OCI-LY7 (cell line): ENCODE measurements at regions of chr1 and their contacts with region 1.

Region 1: DNA sequence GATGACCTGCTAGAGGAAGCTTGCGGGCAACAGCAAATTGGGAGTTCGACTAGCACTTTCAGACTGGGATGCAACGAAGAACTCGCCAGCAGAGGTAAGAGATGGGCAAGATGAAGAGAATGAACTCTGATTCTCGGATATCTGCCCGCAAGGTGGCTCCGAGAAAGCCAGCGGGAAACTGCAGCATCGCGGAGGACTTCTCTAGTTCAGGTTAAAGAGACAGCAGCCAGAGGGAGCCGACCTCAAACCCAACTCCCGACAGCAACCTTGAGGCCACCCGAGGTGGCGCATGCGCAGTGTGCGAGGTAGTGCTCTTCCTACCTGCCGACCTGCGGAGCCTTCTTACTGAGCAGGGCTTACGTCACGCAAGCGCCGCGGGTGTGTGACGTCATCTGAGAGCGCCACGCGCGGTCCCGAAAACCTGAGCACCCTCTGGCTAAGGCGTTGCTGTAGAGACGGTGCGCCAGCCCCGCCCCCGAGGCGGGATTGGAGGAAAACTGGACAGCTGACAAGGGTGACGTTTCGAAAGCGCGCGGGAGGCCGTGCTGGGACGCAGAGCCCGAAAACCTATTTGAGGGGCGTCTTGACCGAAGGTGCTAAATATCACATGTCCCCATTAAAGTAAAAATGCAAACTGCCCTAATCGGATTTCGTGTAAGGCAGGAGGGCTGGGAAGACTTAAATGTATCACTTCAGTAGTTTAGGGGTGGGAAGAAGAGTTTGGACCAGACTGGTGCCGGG is 110.5 kb upstream of the SLC25A33 start:
- DNase-seq: peak; percentile 100
- H3K4me3 ChIP-seq: peak overlapping the region; percentile 69
- H3K27ac ChIP-seq: peak overlapping the region; percentile 95
- H3K4me1 ChIP-seq: peaks cover 69% of the 10 kb centered on the region
- CTCF ChIP-seq: peak; percentile 58; the same call in 1 of the 2 replicates

Region 2: DNA sequence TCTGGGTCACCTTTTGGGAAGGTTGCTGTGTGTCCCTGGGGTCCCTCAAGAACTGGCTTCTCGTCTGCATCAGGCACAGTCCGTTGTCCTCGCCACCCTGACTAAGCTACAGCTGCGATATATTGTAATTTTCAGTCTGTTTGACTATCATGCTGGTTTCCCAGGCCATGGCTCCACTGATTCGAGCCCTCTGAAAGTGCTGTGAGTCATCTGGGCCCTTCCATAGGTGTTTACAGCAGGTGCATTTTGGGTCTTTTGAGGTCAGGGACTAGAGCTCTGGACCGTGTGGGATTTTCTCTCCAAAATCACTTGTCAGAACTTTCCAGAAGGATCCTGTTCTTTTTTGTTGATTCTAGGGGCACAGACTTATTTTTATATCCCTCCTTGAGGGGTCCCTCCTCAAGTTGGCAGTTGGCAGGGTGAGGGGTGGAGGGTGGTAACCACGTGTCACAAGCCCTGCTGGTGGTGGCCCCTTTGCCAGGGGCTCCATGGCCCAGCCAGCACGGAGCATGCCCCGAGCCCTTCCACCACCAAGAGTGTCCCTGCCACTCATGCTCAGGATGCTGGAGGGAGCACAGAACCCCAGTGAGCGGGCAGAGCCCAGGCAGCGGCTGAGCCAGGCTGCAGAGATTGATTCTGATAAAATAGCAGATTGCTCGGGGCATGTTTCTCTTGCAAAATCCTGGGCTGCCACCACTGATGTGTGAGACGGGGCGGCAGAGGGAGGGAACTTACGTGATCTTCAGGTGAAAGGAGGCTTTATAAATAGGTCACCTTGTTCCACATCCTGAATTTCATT is 83.1 kb before region 1 on chr1:
- CTCF ChIA-PET with region 1: no interaction called
- POLR2A ChIA-PET with region 1: no interaction called
- intact Hi-C with region 1: loop called (anchors 1 kb)
- DNase-seq: no peak
- H3K4me3 ChIP-seq: peak overlapping the region; percentile 2
- H3K27ac ChIP-seq: no peak overlapping the region
- H3K4me1 ChIP-seq: peaks cover 36% of the 10 kb centered on the region
- CTCF ChIP-seq: no peak

Region 3: DNA sequence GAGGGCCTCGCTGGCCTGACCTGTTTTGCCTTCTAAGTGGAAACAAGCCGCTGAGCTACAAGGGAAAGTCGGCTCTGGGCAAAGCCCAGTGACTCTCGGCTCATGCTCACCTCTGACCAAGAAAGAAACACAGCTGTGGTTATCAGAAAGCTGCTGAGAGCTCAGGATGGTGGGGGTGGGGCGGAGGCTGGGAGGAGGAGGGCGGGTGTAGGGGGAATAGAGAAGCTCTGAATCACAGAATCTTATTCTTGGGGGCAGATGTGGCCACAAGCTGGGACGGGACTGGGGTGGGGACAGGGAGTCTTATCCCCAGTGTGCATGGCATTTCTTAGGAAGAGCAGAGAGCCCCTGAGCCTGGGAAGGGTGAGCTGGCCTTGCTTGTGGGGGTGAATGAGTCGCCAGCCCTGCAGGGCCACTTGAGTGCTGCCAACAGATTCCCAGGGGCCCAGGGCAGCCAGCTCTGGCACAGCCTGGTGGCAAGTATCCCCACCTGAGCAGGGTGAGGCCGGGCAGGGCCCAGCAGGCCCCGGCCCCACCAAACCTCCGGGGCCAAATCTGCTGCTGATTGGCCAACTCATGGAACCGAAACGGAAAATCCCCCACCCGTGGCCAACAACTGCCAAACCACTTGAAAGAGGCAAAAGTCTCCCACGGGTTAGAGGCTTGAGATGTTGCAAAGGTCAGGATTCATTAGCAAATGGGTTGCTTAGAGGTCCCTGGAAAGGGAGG is 15.5 kb before region 1 on chr1:
- CTCF ChIA-PET with region 1: interaction called, 10 read pairs
- POLR2A ChIA-PET with region 1: interaction called, 24 read pairs
- intact Hi-C with region 1: loop called (anchors 1 kb)
- DNase-seq: peak; percentile 90
- H3K4me3 ChIP-seq: peak overlapping the region; percentile 57
- H3K27ac ChIP-seq: peak overlapping the region; percentile 91
- H3K4me1 ChIP-seq: peaks cover 80% of the 10 kb centered on the region
- CTCF ChIP-seq: no peak

Region 4: GRCh38 chr1:9890224-9890731 is 461.5 kb after region 1 on chr1:
- CTCF ChIA-PET with region 1: no interaction called
- POLR2A ChIA-PET with region 1: interaction called, 10 read pairs
- intact Hi-C with region 1: no loop called
- DNase-seq: no peak
- H3K4me3 ChIP-seq: no peak overlapping the region
- H3K27ac ChIP-seq: peak overlapping the region; percentile 7
- H3K4me1 ChIP-seq: peaks cover 29% of the 10 kb centered on the region
- CTCF ChIP-seq: no peak